Transverse colon (tissue), 4 donors: ENCODE measurements at regions of chr20 and their contacts with region 1.

Region 1: GRCh38 chr20:57398231-57398821 is 7.1 kb downstream of the RBM38 start:
- DNase-seq: peak; percentile 88
- H3K4me3 ChIP-seq: peak overlapping the region in 1 of 4 donors; percentile 17
- H3K27ac ChIP-seq: peak overlapping the region; percentile 92 to 95 (median 93)
- H3K4me1 ChIP-seq: peaks cover 33 to 90% (median 61%) of the 10 kb centered on the region in 4 donors
- H3K27me3 ChIP-seq: no peaks in the 10 kb centered on the region
- CTCF ChIP-seq: no peak
- EP300 ChIP-seq: peak; percentile 20
- POLR2A ChIP-seq: peak; percentile 20

Region 2: GRCh38 chr20:56964888-56965287 is 433.4 kb before region 1 on chr20:
- in situ Hi-C with region 1: no loop called
- intact Hi-C with region 1: no loop called
- DNase-seq: no peak
- H3K4me3 ChIP-seq: no peak overlapping the region
- H3K27ac ChIP-seq: no peak overlapping the region
- H3K4me1 ChIP-seq: no peaks in the 10 kb centered on the region
- H3K27me3 ChIP-seq: peaks cover 6% of the 10 kb centered on the region
- CTCF ChIP-seq: no peak
- EP300 ChIP-seq: no peak
- POLR2A ChIP-seq: no peak

Region 3: GRCh38 chr20:57480444-57481160 is 82.3 kb after region 1 on chr20:
- in situ Hi-C with region 1: no loop called
- intact Hi-C with region 1: loop called (anchors 5 kb)
- DNase-seq: no peak
- H3K4me3 ChIP-seq: no peak overlapping the region
- H3K27ac ChIP-seq: peak overlapping the region in 3 of 4 donors; percentile 53 to 61 (median 54)
- H3K4me1 ChIP-seq: peaks cover 6 to 15% (median 11%) of the 10 kb centered on the region in 4 donors
- H3K27me3 ChIP-seq: peaks cover 6% of the 10 kb centered on the region
- CTCF ChIP-seq: no peak
- EP300 ChIP-seq: no peak
- POLR2A ChIP-seq: no peak

Region 4: DNA sequence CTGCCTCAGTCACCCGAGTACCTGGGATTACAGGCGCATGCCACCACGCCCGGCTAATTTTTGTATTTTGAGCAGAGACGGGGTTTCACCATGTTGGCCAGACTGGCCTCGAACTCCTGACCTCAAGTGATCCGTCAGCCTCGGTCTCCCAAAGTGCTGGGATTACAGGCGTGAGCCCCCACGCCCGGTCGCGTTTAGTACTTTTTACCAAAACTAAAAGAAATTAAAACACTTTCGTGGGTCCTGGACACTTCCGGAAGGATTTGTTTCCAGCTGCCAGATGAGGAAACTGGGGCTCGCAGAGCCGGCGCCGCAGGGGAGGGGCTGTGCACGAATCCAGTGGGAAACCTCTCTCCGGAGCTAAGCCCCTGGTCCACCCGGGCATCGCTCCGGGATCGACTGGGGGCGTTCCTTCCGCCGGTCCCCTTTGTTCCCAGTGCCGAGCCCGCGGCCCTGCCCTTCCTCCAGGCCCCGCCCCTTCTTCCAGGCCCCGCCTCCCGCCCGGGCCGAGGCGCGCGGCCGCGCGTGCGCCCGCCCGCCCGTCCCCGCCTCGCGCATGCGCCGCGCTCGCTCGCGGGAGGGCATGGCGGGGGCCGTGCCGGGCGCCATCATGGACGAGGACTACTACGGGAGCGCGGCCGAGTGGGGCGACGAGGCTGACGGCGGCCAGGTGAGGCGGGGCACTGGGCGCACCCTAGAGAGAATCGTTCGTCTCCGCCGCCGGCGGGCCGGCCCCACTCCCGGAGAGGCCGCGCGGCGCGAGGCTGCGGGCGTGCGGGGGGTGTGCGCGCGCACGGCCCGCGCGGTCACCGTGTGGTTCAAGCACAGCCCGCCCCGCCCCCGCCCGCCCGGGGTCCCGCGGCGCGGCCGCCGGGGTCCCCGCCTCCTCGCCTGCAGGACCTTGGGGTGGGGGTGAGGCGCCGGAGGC is 1582.6 kb after region 1 on chr20 and contains the start of gene NELFCD:
- in situ Hi-C with region 1: no loop called
- intact Hi-C with region 1: no loop called
- DNase-seq: peak; percentile 93
- H3K4me3 ChIP-seq: peak within 1 kb of the TSS; percentile 83 to 96 (median 88)
- H3K27ac ChIP-seq: peak within 1 kb of the TSS; percentile 87 to 94 (median 89)
- H3K4me1 ChIP-seq: peaks cover 7 to 31% (median 20%) of the 10 kb centered on the region in 4 donors
- H3K27me3 ChIP-seq: no peaks in the 10 kb centered on the region
- CTCF ChIP-seq: no peak
- EP300 ChIP-seq: no peak
- POLR2A ChIP-seq: peak; percentile 52
- total RNA-seq, gene NELFCD: 43.7 to 68.1 (median 55.1) TPM